PC-9 (cell line): ENCODE measurements at regions of chr16 and their contacts with region 1.

Region 1: DNA sequence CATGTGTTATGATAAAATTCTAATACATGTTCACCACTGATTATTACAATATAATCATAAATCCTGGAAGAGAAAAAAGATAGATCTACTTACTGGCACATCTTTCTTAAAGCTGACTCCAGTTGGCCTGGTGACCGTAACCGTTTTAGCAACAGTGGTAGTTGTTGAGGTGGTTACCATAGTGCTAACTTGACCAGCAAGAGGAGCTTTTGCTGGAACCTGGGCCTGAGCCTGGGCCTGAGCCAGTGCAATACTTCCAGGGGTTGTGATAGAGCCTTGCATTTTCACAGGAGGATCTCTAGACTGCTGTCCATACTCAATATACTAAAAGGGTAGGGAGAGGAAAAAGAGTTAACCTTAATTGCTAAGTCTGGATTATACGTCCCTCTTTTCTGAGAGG is 36.2 kb downstream of the SETD6 start:
- DNase-seq: no peak
- H3K4me3 ChIP-seq: no peak overlapping the region
- H3K27ac ChIP-seq: no peak overlapping the region
- H3K4me1 ChIP-seq: no peaks in the 10 kb centered on the region
- H3K27me3 ChIP-seq: no peaks in the 10 kb centered on the region
- CTCF ChIP-seq: no peak

Region 2: DNA sequence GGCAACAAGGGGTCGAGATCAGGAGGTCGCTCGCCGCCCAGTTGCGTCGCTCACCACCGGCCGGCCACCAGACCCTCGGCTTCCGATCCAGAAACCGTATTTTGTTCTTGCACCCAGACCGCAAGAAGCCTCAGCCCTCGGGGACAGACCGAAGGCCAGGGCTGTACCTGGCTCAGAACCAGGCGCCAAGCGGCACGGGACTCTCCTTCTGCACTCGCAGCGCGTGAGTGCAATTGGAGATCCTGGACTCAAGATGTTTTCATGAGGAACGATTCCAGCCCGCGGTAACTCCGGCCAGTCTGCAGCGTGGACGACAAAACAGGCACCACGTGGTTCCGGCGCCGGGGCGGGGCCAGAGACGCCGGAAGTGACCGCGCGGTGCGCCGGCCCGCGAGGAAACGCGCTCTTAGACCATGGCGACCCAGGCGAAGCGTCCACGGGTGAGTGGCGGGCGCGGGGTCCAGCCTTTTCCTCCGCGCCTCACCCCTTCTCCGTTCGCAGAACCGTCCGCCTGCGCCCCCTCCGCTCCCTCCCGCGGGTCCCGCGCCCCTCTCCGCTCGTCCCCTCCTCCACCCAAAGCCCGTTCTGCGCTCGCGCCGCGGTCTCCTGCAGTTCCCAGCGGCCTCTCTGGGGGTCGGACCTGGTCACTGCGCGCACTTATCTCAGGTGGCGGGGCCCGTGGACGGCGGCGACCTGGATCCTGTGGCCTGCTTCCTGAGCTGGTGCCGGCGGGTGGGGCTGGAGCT is 36.2 kb before region 1 on chr16 and contains the start of gene SETD6:
- CTCF ChIA-PET with region 1: no interaction called
- POLR2A ChIA-PET with region 1: no interaction called
- intact Hi-C with region 1: loop called (anchors 5 kb)
- DNase-seq: peak; percentile 77 to 88
- H3K4me3 ChIP-seq: peak within 1 kb of the TSS; percentile 99
- H3K27ac ChIP-seq: peak within 1 kb of the TSS; percentile 54
- H3K4me1 ChIP-seq: peaks cover 20% of the 10 kb centered on the region
- H3K27me3 ChIP-seq: no peaks in the 10 kb centered on the region
- CTCF ChIP-seq: no peak; the same call in 1 of the 2 replicates
- total RNA-seq, gene SETD6: 19.2 and 21.4 TPM in 2 replicates